Left ventricle myocardium inferior (tissue), 1 donor: ENCODE measurements at regions of chr12 and their contacts with region 1.

Region 1: GRCh38 chr12:53065975-53066931 is 12.9 kb downstream of the SPRYD3 start:
- DNase-seq: peak; percentile 81
- H3K4me3 ChIP-seq: peak overlapping the region; percentile 31
- H3K27ac ChIP-seq: peak overlapping the region; percentile 100
- H3K4me1 ChIP-seq: peaks cover 100% of the 10 kb centered on the region
- H3K27me3 ChIP-seq: no peaks in the 10 kb centered on the region
- CTCF ChIP-seq: peak; percentile 94

Region 2: DNA sequence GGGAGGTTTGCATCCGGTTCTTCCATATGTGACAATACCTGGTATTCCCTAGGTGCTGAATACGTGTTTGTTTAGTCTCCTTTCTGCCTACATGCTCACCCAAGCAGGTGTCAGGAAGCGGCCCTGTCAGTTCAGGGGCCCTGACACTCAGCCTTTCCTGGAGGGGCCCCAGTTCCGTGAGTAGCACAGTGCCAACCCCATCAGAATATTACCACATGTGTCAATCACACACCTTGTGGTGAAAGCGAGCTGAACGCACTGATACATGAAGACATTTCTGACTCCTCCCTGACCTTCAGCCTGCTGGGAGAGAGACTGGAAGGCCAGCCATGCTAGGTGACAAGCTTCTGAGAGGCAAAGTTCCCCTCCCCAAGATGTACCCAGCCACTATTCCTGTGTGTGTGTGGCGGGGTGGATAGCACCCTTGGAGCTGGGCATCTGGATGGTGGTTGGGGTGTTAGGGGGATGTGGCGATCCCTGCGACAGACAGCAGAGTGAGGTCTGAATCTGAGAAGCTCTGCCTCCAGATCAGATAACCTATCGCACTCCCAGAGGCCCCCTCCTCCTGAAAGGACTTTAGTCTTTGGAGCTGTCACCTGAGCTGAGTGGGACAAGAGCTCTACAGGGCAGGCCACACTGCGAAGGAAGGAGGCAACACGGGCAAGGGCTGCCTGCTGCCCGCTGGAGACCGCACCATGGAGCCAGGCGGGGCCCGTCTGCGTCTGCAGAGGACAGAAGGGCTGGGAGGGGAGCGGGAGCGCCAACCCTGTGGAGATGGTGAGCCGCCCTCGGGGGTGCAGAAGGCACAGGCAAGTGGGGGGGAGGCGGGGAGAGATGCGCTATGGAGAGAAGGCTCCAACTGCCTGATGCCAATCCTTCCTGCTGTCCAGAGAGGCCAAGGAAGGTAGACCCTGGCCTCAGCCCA is 36.9 kb after region 1 on chr12 and contains the start of gene SOAT2:
- intact Hi-C with region 1: loop called (anchors 5 kb)
- DNase-seq: no peak
- H3K4me3 ChIP-seq: no peak within 1 kb of the TSS
- H3K27ac ChIP-seq: no peak within 1 kb of the TSS
- H3K4me1 ChIP-seq: peaks cover 30% of the 10 kb centered on the region
- H3K27me3 ChIP-seq: no peaks in the 10 kb centered on the region
- CTCF ChIP-seq: no peak
- total RNA-seq, gene SOAT2: not detected

Region 3: GRCh38 chr12:53174881-53175491 is 108.7 kb after region 1 on chr12:
- intact Hi-C with region 1: no loop called
- DNase-seq: no peak
- H3K4me3 ChIP-seq: no peak overlapping the region
- H3K27ac ChIP-seq: no peak overlapping the region
- H3K4me1 ChIP-seq: peaks cover 18% of the 10 kb centered on the region
- H3K27me3 ChIP-seq: no peaks in the 10 kb centered on the region
- CTCF ChIP-seq: no peak